Sigmoid colon (tissue), 7 donors: ENCODE measurements at regions of chr3 and their contacts with region 1.

Region 1: GRCh38 chr3:192917404-192918274 is at the start of gene MB21D2:
- DNase-seq: peak; percentile 89
- H3K4me3 ChIP-seq: peak within 1 kb of the TSS; percentile 59 to 81 (median 64)
- H3K27ac ChIP-seq: peak within 1 kb of the TSS; percentile 88 to 97 (median 93)
- H3K4me1 ChIP-seq: peaks cover 0 to 44% (median 38%) of the 10 kb centered on the region in 4 donors
- H3K27me3 ChIP-seq: no peaks in the 10 kb centered on the region
- CTCF ChIP-seq: no peak
- EP300 ChIP-seq: peak in 1 of 4 donors; percentile 29
- POLR2A ChIP-seq: peak; percentile 25 to 41
- total RNA-seq, gene MB21D2: 5.8 to 7.8 (median 6.5) TPM

Region 2: DNA sequence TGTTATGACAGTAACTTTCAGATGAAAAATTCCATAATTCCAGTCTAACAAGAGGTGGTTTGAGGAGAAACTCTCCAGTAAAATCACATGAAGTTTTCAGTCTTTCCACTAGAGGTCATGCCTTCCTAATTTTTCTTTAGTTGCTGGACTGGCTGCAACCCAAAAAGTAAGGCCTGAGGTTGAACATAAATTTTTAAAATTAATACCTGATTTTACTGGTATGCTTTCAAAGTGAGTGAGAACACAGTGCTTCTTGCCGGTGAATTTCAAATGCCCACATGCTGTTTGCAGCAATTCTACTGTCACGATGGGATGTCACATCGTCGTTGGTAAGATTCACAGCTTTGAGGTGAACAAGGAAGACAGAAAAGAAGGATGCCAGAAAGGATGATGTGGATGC is 101.3 kb before region 1 on chr3:
- intact Hi-C with region 1: loop called (anchors 5 kb)
- DNase-seq: no peak
- H3K4me3 ChIP-seq: no peak overlapping the region
- H3K27ac ChIP-seq: no peak overlapping the region
- H3K4me1 ChIP-seq: peaks cover 0 to 26% (median 12%) of the 10 kb centered on the region in 4 donors
- H3K27me3 ChIP-seq: no peaks in the 10 kb centered on the region
- CTCF ChIP-seq: peak; percentile 23 to 77 (median 66)
- EP300 ChIP-seq: no peak
- POLR2A ChIP-seq: no peak

Region 3: DNA sequence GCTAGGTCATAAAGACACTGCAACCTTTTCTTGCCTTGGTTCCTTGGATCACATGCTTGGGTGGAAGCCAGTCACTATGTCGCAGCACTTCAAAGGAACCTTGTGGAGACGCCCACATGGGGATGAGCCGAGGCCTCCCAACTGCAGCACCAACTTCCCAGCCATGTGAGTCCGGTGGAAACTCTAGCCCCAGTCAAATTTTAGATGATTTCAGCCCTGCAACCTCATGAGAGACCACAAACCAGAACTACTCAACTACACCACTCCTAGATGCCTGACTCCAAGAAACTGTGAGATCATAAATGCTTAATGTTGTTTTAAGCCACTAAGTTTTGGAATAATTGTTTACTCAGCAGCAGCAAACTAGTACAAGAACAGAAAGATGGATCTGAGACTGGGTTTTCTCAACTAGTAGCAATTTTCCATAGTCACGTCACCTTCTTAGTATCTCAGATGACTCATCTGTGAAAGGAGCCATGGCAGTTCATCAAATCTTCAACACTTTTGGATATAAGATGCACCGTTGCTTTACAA is 86.5 kb before region 1 on chr3:
- intact Hi-C with region 1: loop called (anchors 2 kb)
- DNase-seq: no peak
- H3K4me3 ChIP-seq: no peak overlapping the region
- H3K27ac ChIP-seq: peak overlapping the region in 2 of 4 donors; percentile 41 to 78
- H3K4me1 ChIP-seq: peaks cover 0 to 64% (median 53%) of the 10 kb centered on the region in 4 donors
- H3K27me3 ChIP-seq: no peaks in the 10 kb centered on the region
- CTCF ChIP-seq: no peak
- EP300 ChIP-seq: no peak
- POLR2A ChIP-seq: no peak

Region 4: GRCh38 chr3:193592944-193593667 is 675.5 kb after region 1 on chr3 and contains the start of gene OPA1:
- intact Hi-C with region 1: loop called (anchors 5 kb)
- DNase-seq: peak; percentile 99
- H3K4me3 ChIP-seq: peak within 1 kb of the TSS; percentile 65 to 84 (median 72)
- H3K27ac ChIP-seq: peak within 1 kb of the TSS; percentile 83 to 88 (median 86)
- H3K4me1 ChIP-seq: peaks cover 0 to 21% (median 20%) of the 10 kb centered on the region in 4 donors
- H3K27me3 ChIP-seq: no peaks in the 10 kb centered on the region
- CTCF ChIP-seq: peak in 2 of 4 experiments; percentile 15 to 34
- EP300 ChIP-seq: peak in 1 of 4 donors; percentile 85
- POLR2A ChIP-seq: peak; percentile 57 to 73
- total RNA-seq, gene OPA1: 45.9 to 58.7 (median 49.0) TPM